ENCODE measurements at regions of chr22 and their contacts with region 1.

Region 1: DNA sequence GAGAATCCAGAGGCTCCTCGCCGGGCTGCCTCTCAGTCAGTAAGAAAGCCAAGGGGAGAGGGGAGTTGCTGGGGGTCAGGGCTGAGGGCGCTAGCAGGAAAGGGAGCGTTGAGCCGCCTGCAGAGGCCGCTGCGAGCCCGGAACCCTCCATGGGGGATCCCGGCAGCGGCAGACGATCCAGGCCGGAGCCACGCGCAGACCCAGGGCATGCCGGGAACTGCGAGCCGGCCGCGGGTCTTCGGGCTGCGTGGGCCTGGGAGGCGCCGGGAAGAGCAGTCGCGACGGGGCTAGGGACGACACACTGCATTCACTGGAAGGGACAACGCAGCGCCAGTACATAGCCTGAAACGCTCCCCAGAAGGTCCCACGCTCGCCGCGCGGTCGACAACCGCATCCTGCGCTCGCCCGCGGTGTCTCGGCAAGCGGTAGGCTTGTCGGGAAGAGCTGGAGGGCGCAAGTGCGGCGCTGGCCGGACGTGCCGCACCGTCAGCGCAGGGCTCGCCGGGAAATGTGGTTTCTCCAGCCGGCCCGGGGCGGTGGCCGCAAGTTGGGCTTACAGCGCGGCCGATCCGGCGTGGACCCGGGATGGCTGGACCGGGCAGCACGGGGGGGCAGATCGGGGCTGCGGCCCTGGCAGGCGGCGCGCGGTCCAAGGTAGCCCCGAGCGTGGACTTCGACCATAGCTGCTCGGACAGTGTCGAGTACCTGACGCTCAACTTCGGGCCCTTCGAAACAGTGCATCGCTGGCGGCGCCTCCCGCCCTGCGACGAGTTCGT is at the start of gene LZTR1:
- DNase-seq: peak; percentile 86 to 91 (median 88)
- ATAC-seq: peak; percentile 87 to 96 (median 95)
- H3K4me3 ChIP-seq: peak within 1 kb of the TSS; percentile 65 to 99 (median 88)
- H3K27ac ChIP-seq: peak within 1 kb of the TSS; percentile 22 to 96 (median 94)
- H3K4me1 ChIP-seq: peaks cover 7 to 39% (median 25%) of the 10 kb centered on the region in 12 donors
- H3K27me3 ChIP-seq: peaks cover 0 to 3% (median 0%) of the 10 kb centered on the region in 9 donors
- CTCF ChIP-seq: peak; percentile 38 to 83 (median 60)
- POLR2A ChIP-seq: peak in 1 of 2 donors; percentile 90
- total RNA-seq, gene LZTR1: 18.4 to 41.9 (median 26.6) TPM

Region 2: GRCh38 chr22:20858615-20859416 is 123.2 kb before region 1 on chr22 and contains the starts of genes PI4KA and SNAP29:
- intact Hi-C with region 1: loop called in 3 of 10 experiments (anchors 5 to 10 kb)
- DNase-seq: peak; percentile 99 to 100 (median 99)
- ATAC-seq: peak; percentile 98 to 99 (median 98)
- H3K4me3 ChIP-seq: peak within 1 kb of the TSS; percentile 78 to 98 (median 89)
- H3K27ac ChIP-seq: peak within 1 kb of the TSS; percentile 59 to 95 (median 90)
- H3K4me1 ChIP-seq: peaks cover 0 to 64% (median 32%) of the 10 kb centered on the region in 12 donors
- H3K27me3 ChIP-seq: no peaks in the 10 kb centered on the region
- CTCF ChIP-seq: peak in 2 of 12 donors; percentile 14 to 24
- POLR2A ChIP-seq: peak in 1 of 2 donors; percentile 88
- total RNA-seq, gene PI4KA: 34.6 to 66.4 (median 48.3) TPM
- total RNA-seq, gene SNAP29: 20.4 to 38.7 (median 26.2) TPM

Region 3: GRCh38 chr22:20867179-20868024 is 114.6 kb before region 1 on chr22:
- intact Hi-C with region 1: loop called in 2 of 10 experiments (anchors 5 to 10 kb)
- DNase-seq: peak in 4 of 5 donors; percentile 66 to 71 (median 70)
- ATAC-seq: peak; percentile 77 to 96 (median 89)
- H3K4me3 ChIP-seq: peak overlapping the region in 8 of 12 donors; percentile 8 to 42 (median 26)
- H3K27ac ChIP-seq: peak overlapping the region; percentile 65 to 91 (median 84)
- H3K4me1 ChIP-seq: peaks cover 0 to 60% (median 29%) of the 10 kb centered on the region in 12 donors
- H3K27me3 ChIP-seq: no peaks in the 10 kb centered on the region
- CTCF ChIP-seq: no peak
- POLR2A ChIP-seq: peak in 1 of 2 donors; percentile 52

Region 4: DNA sequence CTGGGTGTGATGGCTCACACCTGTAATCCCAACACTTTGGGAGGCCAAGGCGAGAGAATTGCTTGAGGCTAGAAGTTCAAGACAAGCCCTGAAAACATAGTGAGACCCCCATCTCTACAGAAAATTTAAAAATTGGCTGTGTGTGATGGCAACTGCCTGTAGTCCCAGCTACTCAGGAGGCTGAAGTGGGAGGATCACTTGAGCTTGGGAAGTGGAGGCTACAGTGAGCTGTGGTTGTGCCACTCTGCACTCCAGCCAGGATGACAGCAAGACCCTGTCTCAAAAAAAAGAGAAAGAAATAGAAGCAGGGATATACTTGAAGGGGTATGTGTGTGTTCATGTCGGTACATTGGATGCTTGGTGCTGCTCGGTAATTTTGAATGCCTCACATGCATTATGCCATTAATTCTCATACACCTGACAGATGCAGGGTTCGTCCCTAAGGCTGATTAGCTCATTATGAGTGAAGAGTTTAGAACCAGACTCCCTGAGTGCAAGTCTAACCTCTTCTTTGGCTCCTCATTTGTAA is 50.8 kb before region 1 on chr22:
- intact Hi-C with region 1: loop called in 1 of 10 experiments (anchors 5 kb)
- DNase-seq: no peak
- ATAC-seq: no peak
- H3K4me3 ChIP-seq: no peak overlapping the region
- H3K27ac ChIP-seq: no peak overlapping the region
- H3K4me1 ChIP-seq: peaks cover 0 to 45% (median 13%) of the 10 kb centered on the region in 12 donors
- H3K27me3 ChIP-seq: no peaks in the 10 kb centered on the region
- CTCF ChIP-seq: no peak
- POLR2A ChIP-seq: no peak

Region 5: DNA sequence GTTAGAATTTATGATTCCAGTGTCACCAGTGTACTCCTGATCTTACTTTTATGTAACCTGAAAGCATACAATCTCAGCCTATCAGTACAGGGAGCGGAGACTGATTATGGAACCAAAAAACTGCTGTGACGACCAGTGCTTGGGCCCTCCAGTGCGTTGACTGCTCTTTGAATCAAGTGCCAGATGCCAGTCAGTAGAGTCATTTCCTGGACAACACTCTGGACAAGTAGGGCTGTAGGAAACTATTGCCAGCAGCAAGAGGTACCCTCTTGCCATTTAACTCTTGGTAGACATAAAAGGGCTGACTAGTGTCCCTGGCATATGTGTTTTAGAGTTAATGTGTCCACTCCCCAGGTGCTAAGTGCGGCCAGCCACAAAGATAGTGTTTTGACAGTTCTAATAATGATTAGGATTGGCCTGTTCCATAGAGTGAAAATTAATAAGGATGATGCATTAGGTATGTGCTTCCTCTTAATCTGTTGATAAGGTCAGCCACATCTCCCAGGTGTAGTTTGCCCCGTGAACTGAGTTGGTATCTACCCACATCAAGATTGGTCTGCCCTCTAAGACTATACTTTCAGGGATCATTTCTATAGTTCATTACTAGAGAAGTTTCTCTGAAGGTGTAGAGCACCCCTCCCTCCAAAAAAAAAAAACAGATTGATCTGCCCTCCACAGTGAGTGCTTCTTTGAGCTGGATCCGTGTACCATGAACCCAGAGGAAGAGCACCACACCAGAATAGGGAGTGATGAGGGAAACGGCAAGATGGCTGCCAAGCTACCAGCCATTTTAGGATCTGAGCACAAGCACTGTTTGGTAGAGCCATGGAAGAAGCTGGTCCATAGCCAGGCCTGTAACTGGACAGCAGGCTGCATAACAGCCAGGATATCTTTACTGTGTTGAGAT is 35.6 kb before region 1 on chr22:
- intact Hi-C with region 1: loop called in 1 of 10 experiments (anchors 5 kb)
- DNase-seq: peak in 1 of 5 donors; percentile 58
- ATAC-seq: peak; percentile 59 to 89 (median 84)
- H3K4me3 ChIP-seq: no peak overlapping the region
- H3K27ac ChIP-seq: peak overlapping the region in 4 of 12 donors; percentile 12 to 63 (median 24)
- H3K4me1 ChIP-seq: peaks cover 0 to 42% (median 25%) of the 10 kb centered on the region in 12 donors
- H3K27me3 ChIP-seq: no peaks in the 10 kb centered on the region
- CTCF ChIP-seq: no peak
- POLR2A ChIP-seq: no peak

Region 6: GRCh38 chr22:21001560-21002325 is 19.8 kb after region 1 on chr22 and contains the start of gene THAP7:
- intact Hi-C with region 1: loop called in 1 of 10 experiments (anchors 2 kb)
- DNase-seq: peak; percentile 97 to 99 (median 98)
- ATAC-seq: peak; percentile 95 to 97 (median 96)
- H3K4me3 ChIP-seq: peak within 1 kb of the TSS; percentile 61 to 94 (median 78)
- H3K27ac ChIP-seq: peak within 1 kb of the TSS; percentile 91 to 99 (median 98)
- H3K4me1 ChIP-seq: peaks cover 3 to 36% (median 30%) of the 10 kb centered on the region in 12 donors
- H3K27me3 ChIP-seq: no peaks in the 10 kb centered on the region
- CTCF ChIP-seq: no peak
- POLR2A ChIP-seq: peak in 1 of 2 donors; percentile 76
- total RNA-seq, gene THAP7: 15.3 to 39.0 (median 17.5) TPM

Region 7: GRCh38 chr22:21045585-21046294 is 63.8 kb after region 1 on chr22 and contains the start of gene LRRC74B:
- intact Hi-C with region 1: no loop called
- DNase-seq: peak; percentile 88 to 93 (median 92)
- ATAC-seq: peak; percentile 94 to 99 (median 96)
- H3K4me3 ChIP-seq: peak within 1 kb of the TSS; percentile 11 to 60 (median 54)
- H3K27ac ChIP-seq: no peak within 1 kb of the TSS
- H3K4me1 ChIP-seq: peaks cover 0 to 19% (median 7%) of the 10 kb centered on the region in 12 donors
- H3K27me3 ChIP-seq: no peaks in the 10 kb centered on the region
- CTCF ChIP-seq: no peak
- POLR2A ChIP-seq: no peak
- total RNA-seq, gene LRRC74B: not detected